Aorta (tissue), 5 donors: ENCODE measurements at regions of chr2 and their contacts with region 1.

Region 1: GRCh38 chr2:231642631-231643494 is 50.2 kb downstream of the TEX44 start:
- DNase-seq: peak; percentile 94 to 96
- ATAC-seq: peak; percentile 94
- H3K4me3 ChIP-seq: no peak overlapping the region
- H3K27ac ChIP-seq: peak overlapping the region; percentile 97 to 99
- H3K4me1 ChIP-seq: peaks cover 0 to 3% of the 10 kb centered on the region in 2 donors
- H3K27me3 ChIP-seq: no peaks in the 10 kb centered on the region

Region 2: DNA sequence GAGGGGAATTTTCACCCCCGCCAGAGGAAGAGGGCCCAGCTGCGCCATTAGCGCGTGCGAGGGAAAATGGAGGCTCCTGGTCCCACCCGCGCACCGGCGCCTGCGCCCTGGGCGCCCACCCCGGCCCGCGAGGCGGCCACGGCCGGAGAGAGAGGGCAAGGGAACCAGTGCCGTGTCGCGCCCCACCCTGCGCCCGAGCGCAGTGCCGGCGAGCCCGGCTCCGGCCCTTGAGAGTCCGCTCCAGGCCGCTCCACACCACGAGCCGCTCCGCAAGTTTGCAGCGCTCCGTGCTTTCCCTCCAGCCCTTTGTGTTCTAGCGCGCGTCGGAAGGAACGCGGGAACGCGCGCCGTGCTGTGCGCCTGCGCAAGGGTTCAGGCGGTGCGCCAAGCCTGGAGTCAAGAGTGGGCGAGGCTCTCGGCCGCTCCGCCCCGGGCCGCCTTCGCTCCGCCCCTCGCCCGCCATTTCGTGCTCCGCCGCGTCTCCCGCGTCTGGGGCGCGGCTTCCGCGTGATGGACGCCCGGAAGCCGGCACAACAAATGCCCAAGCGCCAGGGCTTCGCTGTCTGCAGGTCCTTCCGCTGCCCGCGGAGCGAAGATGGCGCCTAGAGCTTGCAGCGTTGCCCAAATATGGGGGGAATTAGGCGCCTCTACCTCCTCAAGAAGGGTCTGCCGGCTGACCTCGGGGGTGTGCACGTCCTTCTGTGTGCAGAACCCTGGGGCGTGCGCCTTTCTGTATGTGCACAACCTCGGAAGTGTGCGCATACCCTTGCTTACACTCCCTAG is 19.4 kb after region 1 on chr2:
- intact Hi-C with region 1: loop called in 1 of 2 experiments (anchors 2 kb)
- DNase-seq: peak; percentile 97 to 99
- ATAC-seq: peak; percentile 93
- H3K4me3 ChIP-seq: peak overlapping the region in 1 of 2 donors; percentile 13
- H3K27ac ChIP-seq: peak overlapping the region; percentile 16 to 93
- H3K4me1 ChIP-seq: no peaks in the 10 kb centered on the region
- H3K27me3 ChIP-seq: no peaks in the 10 kb centered on the region

Region 3: DNA sequence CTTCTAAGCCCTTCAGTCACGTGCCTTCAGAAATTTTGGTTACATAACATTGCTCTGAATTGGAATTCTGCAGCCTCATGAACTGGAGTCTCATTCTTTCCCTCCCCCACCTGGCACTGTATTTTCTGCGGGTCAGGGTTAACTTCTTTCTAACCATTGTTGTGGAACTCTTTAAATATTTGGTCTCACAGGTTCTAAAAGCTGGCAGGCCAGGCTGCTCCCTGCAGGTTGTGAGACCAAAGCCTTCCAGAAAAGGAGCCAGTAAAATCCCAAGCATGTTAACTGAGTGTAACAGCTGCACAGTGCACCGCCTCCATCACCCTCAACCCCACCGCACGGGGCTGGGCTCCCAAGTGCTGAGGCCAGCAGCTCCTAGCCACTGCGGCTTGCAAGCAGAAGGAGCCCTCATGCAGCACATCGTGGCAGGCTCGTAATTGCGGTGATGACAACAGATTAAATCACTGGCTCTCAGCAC is 561.6 kb after region 1 on chr2:
- intact Hi-C with region 1: no loop called
- DNase-seq: no peak
- ATAC-seq: no peak
- H3K4me3 ChIP-seq: no peak overlapping the region
- H3K27ac ChIP-seq: no peak overlapping the region
- H3K4me1 ChIP-seq: no peaks in the 10 kb centered on the region
- H3K27me3 ChIP-seq: no peaks in the 10 kb centered on the region